A549 (cell line): ENCODE measurements at regions of chr2 and their contacts with region 1.

Region 1: GRCh38 chr2:72973566-72974435 is 56.5 kb downstream of the EMX1 start:
- DNase-seq: peak; percentile 67 to 89
- ATAC-seq: peak; percentile 91 to 97
- H3K4me3 ChIP-seq: no peak overlapping the region
- H3K27ac ChIP-seq: no peak overlapping the region
- H3K4me1 ChIP-seq: no peaks in the 10 kb centered on the region
- CTCF ChIP-seq: peak; percentile 85
- EP300 ChIP-seq: no peak
- POLR2A ChIP-seq: no peak
- RAD21 ChIP-seq: peak; percentile 66 to 67

Region 2: DNA sequence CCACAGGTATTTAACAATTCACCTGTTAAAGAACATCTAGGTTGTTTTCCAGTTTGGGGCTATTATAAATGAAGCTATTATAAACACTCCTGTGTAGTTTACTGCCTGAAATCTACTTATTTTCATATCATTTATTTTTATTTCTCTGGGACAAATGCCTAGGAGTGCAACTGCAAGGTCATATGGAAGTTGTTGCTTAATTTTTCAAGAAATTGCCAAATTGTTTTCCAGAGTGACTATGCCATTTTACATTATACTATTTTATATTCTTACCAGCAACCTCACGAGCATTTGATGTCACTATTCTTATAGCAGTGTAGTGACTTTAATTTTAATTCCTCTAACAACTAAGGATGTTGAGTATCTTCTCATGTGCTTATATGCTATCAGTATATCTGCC is 446.4 kb before region 1 on chr2:
- CTCF ChIA-PET with region 1: no interaction called
- POLR2A ChIA-PET with region 1: no interaction called
- DNase-seq: no peak
- ATAC-seq: no peak
- H3K4me3 ChIP-seq: no peak overlapping the region
- H3K27ac ChIP-seq: no peak overlapping the region
- H3K4me1 ChIP-seq: peaks cover 9% of the 10 kb centered on the region; the same call in 2 of the 3 replicates
- CTCF ChIP-seq: no peak
- EP300 ChIP-seq: no peak
- POLR2A ChIP-seq: no peak
- RAD21 ChIP-seq: no peak

Region 3: GRCh38 chr2:72719416-72719815 is 254.4 kb before region 1 on chr2:
- CTCF ChIA-PET with region 1: no interaction called
- POLR2A ChIA-PET with region 1: no interaction called
- DNase-seq: no peak
- ATAC-seq: no peak
- H3K4me3 ChIP-seq: no peak overlapping the region
- H3K27ac ChIP-seq: no peak overlapping the region
- H3K4me1 ChIP-seq: peaks cover 44% of the 10 kb centered on the region
- CTCF ChIP-seq: no peak
- EP300 ChIP-seq: no peak
- POLR2A ChIP-seq: no peak
- RAD21 ChIP-seq: no peak

Region 4: GRCh38 chr2:72895759-72896281 is 78.0 kb before region 1 on chr2:
- CTCF ChIA-PET with region 1: interaction called, 208 read pairs
- POLR2A ChIA-PET with region 1: no interaction called
- DNase-seq: no peak
- ATAC-seq: no peak
- H3K4me3 ChIP-seq: no peak overlapping the region
- H3K27ac ChIP-seq: no peak overlapping the region
- H3K4me1 ChIP-seq: peaks cover 8% of the 10 kb centered on the region; the same call in 1 of the 3 replicates
- CTCF ChIP-seq: no peak
- EP300 ChIP-seq: no peak
- POLR2A ChIP-seq: no peak
- RAD21 ChIP-seq: no peak

Region 5: DNA sequence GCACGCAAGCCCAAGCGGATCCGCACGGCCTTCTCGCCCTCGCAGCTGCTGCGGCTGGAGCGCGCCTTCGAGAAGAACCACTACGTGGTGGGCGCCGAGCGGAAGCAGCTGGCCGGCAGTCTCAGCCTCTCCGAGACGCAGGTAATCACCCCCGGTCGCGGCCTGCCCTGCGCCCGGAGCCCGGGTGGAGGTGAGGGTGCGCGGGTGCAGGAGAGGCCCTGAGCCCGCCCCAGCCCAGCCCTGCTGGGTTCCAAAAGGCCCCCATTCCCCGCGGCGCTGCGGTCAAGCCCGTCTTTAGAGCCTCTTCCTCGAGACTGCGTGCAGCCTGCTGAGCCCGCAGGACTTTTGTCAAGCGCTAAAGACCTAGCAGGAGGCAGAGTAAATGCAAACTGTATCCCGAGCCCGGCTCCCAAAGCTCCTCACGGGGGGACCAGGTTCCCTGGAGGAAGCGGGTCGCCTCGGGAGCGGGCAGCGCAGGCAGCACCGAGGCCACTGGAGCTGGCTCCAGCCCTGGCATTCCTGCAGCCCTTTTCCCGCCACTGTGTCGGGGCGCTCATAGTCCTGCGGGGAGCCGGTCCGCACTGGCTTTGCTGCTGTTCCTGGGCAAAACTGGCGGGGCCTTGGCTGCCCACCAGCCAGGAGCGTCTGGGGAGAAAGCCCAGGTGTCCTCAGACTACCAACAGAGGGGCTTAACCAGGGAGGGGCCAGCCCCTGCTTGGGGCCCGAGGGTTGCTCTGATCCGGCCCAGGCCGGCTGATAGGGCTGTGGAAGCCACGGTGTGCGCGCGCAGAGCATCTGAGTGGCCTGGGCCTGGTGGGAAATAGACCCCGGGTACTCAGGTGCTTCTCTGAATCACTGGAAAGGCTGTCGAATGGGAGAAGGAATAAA is 49.2 kb before region 1 on chr2:
- CTCF ChIA-PET with region 1: interaction called, 10 read pairs
- POLR2A ChIA-PET with region 1: no interaction called
- DNase-seq: no peak
- ATAC-seq: peak; percentile 6 to 36; a peak in 3 of 6 replicates
- H3K4me3 ChIP-seq: no peak overlapping the region
- H3K27ac ChIP-seq: no peak overlapping the region
- H3K4me1 ChIP-seq: peaks cover 5% of the 10 kb centered on the region; the same call in 1 of the 3 replicates
- CTCF ChIP-seq: no peak
- EP300 ChIP-seq: no peak
- POLR2A ChIP-seq: no peak
- RAD21 ChIP-seq: no peak

Region 6: GRCh38 chr2:72953976-72954375 is 19.8 kb before region 1 on chr2:
- CTCF ChIA-PET with region 1: interaction called, 34 read pairs
- POLR2A ChIA-PET with region 1: no interaction called
- DNase-seq: no peak
- ATAC-seq: no peak
- H3K4me3 ChIP-seq: no peak overlapping the region
- H3K27ac ChIP-seq: no peak overlapping the region
- H3K4me1 ChIP-seq: no peaks in the 10 kb centered on the region
- CTCF ChIP-seq: no peak
- EP300 ChIP-seq: no peak
- POLR2A ChIP-seq: no peak
- RAD21 ChIP-seq: no peak

Region 7: GRCh38 chr2:72993147-72993932 is 19.5 kb after region 1 on chr2:
- CTCF ChIA-PET with region 1: interaction called, 190 read pairs
- POLR2A ChIA-PET with region 1: no interaction called
- DNase-seq: peak; percentile 42 to 89
- ATAC-seq: peak; percentile 33 to 79; a peak in 4 of 6 replicates
- H3K4me3 ChIP-seq: no peak overlapping the region
- H3K27ac ChIP-seq: no peak overlapping the region
- H3K4me1 ChIP-seq: no peaks in the 10 kb centered on the region
- CTCF ChIP-seq: peak; percentile 90
- EP300 ChIP-seq: no peak
- POLR2A ChIP-seq: no peak
- RAD21 ChIP-seq: peak; percentile 63 to 77

Region 8: DNA sequence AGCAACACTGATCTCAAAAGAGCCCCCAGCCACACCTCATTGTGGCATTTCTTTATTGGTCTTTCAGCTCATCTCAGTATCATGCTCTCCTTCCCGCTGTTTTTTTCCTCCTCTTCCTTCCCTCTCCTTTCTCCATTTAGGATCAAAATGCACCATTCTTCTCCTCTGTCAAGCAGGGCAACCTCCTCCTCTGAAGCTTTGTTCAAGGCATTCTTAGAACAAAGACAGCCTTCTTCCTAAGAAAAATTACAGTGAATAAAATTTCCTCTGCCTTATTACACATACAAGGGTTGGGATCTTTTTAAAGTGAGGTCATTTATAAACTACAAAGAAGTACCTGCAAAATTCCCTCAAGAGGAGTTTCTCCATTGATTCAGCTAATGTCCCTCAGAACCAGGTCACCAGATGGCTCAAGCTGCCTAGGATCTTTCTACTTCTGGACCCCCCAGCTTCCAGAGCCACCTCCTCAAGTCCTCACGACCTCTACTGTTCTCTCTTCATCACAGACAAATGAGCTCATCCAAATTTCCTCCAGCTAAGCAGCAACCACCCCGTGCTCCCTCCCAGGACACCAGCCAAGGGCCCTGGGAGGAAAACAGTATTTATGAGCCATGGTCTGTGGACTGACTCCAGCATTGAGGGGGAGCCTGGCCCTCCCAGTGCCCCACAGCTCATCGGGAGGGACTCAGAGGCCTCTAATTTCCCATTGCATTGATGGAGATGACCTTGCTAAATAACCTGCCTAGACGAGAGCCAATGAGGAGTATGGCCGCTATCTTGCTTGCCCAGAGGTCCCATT is 79.7 kb after region 1 on chr2:
- CTCF ChIA-PET with region 1: no interaction called
- POLR2A ChIA-PET with region 1: no interaction called
- DNase-seq: no peak
- ATAC-seq: no peak
- H3K4me3 ChIP-seq: no peak overlapping the region
- H3K27ac ChIP-seq: no peak overlapping the region
- H3K4me1 ChIP-seq: 0 out of 3 replicates have a peak, but pooled peaks cover 5% of the 10 kb centered on the region
- CTCF ChIP-seq: no peak
- EP300 ChIP-seq: no peak
- POLR2A ChIP-seq: no peak
- RAD21 ChIP-seq: no peak

Region 9: GRCh38 chr2:73156539-73157124 is 182.8 kb after region 1 on chr2:
- CTCF ChIA-PET with region 1: interaction called, 19 read pairs
- POLR2A ChIA-PET with region 1: no interaction called
- DNase-seq: peak; percentile 58 to 69
- ATAC-seq: peak; percentile 96 to 98
- H3K4me3 ChIP-seq: 0 out of 3 replicates have a peak overlapping the region, but pooled peaks have one; percentile 5
- H3K27ac ChIP-seq: peak overlapping the region in 1 of 2 experiments; percentile 65; a peak in 2 of 6 replicates
- H3K4me1 ChIP-seq: peaks cover 4% of the 10 kb centered on the region; the same call in 1 of the 3 replicates
- CTCF ChIP-seq: peak; percentile 93
- EP300 ChIP-seq: no peak
- POLR2A ChIP-seq: no peak
- RAD21 ChIP-seq: peak; percentile 96 to 97